ENCODE measurements at regions of chr19 and their contacts with region 1.

Region 1: GRCh38 chr19:21767065-21767800 is at the start of gene ZNF100:
- DNase-seq: peak; percentile 92 to 94
- H3K4me3 ChIP-seq: peak within 1 kb of the TSS; percentile 29 to 56 (median 49)
- H3K27ac ChIP-seq: peak within 1 kb of the TSS; percentile 39 to 67 (median 60)
- H3K4me1 ChIP-seq: peaks cover 0 to 12% of the 10 kb centered on the region in 2 donors
- H3K27me3 ChIP-seq: no peaks in the 10 kb centered on the region
- CTCF ChIP-seq: no peak
- POLR2A ChIP-seq: peak in 1 of 2 donors; percentile 64
- total RNA-seq, gene ZNF100: 5.3 to 9.4 (median 5.9) TPM

Region 2: DNA sequence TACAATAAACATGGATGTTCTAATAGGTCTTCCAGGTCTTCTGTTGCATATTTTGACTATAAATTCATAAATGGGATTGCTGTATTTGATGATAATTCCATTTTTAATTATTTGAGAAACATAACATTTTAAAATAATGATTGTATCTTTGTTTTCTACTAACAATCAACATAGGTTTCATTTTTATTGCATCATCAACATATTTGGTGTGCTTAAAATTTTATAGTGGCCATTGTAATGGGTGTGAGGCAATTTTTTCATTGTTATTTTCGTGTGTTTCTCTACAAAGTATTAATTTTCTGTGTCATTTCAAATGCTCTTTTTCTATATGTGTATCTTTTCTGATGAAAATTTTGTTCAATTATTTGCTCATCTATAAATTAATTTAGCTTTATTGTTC is 357.1 kb before region 1 on chr19:
- intact Hi-C with region 1: no loop called
- DNase-seq: no peak
- H3K4me3 ChIP-seq: no peak overlapping the region
- H3K27ac ChIP-seq: no peak overlapping the region
- H3K4me1 ChIP-seq: no peaks in the 10 kb centered on the region
- H3K27me3 ChIP-seq: no peaks in the 10 kb centered on the region
- CTCF ChIP-seq: no peak
- POLR2A ChIP-seq: no peak

Region 3: DNA sequence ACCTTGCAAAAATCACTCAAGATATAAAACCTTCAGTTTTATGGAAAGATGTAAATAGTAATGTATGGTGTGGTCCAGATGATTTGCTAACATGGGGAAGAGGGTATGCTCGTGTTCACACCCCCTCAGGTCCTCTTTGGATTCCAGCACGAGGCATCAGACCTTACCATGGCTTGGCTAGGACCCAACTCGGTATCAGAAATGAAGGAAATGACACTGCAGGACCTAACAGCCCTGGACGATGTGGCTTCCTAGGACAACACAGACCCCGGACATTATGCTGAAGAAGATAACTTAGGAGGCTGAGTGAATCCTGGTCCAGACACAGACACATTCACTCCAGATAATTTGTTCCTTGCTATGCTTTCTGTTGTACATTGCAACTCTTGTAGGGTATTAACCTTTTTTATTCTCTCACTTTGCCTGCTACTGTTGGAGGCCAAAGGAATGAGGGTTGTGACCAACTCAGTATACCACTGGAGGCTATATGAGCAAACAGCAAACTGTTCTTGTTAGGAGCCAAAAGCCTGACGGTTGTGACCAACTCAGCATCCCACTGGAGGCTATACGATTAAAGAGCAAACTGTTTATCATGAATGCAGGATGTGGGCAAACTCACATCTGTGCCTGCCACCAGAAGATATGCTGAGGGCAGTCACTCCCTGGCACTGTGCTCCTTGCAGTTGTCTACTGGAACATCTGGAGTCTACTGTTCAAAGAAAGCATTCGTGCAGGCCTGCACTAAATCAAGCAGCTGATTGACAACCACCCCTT is 140.1 kb before region 1 on chr19:
- intact Hi-C with region 1: no loop called
- DNase-seq: no peak
- H3K4me3 ChIP-seq: no peak overlapping the region
- H3K27ac ChIP-seq: no peak overlapping the region
- H3K4me1 ChIP-seq: no peaks in the 10 kb centered on the region
- H3K27me3 ChIP-seq: no peaks in the 10 kb centered on the region
- CTCF ChIP-seq: no peak
- POLR2A ChIP-seq: no peak

Region 4: DNA sequence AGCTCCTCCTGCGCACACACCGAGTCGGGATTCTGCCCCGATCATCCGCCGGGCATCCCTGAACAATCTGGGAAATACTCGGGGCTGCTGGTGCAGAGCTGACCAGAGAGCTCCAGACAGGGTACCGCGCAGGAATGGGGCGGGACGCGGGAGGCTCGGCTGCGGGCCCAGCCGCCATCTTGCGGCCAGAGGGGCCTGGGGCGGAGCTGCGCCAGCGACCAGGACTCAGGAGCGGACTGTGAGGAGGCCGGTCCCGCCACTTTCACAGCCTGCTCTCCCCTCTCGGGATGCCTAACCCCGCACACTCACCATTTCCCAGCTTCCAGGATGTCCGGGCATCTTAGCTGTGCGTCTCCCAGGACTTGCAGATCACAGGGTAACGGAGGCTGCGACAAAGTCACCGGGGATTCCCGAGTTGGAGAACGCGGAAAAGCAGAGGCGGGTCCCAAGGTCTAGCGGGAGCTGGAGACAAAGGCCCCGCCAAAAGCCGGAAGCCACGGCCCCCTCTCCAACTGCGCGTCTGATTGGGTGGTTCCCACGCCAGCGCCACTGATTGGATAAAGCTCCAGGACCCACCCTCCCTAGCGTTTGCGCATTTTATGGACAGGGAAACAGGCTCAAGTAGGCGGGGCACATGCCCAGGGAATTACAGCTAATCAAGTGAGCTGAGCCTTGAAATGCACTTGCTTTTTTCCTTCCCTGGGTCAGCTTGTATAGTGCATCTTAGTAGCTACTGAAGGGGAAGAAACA is 84.5 kb after region 1 on chr19:
- intact Hi-C with region 1: loop called (anchors 10 kb)
- DNase-seq: peak; percentile 97 to 98
- H3K4me3 ChIP-seq: peak overlapping the region; percentile 56 to 77 (median 58)
- H3K27ac ChIP-seq: peak overlapping the region; percentile 38 to 59 (median 46)
- H3K4me1 ChIP-seq: peaks cover 4 to 9% of the 10 kb centered on the region in 2 donors
- H3K27me3 ChIP-seq: no peaks in the 10 kb centered on the region
- CTCF ChIP-seq: no peak
- POLR2A ChIP-seq: peak in 1 of 2 donors; percentile 45

Region 5: DNA sequence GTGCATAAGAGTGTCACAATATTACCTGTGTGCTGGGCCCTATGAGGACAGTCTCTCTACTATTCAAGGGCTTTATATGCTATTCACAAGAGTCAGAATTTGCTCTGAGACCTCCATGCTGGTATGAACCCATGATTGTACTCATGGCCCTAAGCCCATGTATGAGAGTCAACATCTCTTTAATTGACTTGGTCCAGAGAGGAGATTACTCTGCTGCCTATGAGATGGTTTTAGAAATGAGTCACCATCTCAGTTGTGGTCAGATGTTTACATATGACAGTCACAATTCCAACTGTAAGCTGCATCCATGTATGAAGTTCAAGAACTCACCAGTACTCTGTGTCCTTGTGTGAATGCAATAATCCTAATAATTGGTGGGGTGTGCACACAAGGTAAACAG is 263.4 kb after region 1 on chr19:
- intact Hi-C with region 1: no loop called
- DNase-seq: no peak
- H3K4me3 ChIP-seq: no peak overlapping the region
- H3K27ac ChIP-seq: no peak overlapping the region
- H3K4me1 ChIP-seq: no peaks in the 10 kb centered on the region
- H3K27me3 ChIP-seq: no peaks in the 10 kb centered on the region
- CTCF ChIP-seq: no peak
- POLR2A ChIP-seq: no peak